Vagina (tissue), 2 donors: ENCODE measurements at regions of chr3 and their contacts with region 1.

Region 1: DNA sequence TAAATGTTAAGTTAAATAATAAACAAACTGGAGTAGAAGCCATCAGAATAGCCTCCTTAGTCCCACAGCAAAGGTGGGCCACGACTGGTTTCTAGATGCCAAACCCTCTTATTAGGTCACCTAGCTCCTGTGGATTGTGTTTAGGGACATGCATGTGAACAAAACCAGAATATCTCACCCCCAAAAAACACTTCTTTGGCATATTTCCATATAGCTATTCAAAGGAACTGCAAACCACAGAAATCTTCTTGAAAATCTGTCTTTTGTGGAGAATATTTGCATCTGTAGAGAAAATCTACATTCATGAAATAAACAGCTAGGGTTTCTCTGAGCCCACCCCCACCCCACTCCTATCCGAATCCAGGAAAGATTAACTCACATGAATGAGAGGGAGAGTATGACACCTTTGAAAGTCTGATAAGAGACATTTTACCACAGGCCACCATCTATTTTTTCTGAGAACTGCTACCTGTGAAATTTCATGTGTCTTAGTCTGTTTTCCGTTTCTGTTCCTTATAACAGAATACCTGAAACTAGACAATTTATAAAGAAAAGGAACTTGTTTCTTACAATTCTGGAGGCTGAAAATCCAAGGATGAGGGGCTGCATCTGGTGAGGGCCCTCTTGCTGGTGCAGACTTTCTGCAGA is 159.4 kb downstream of the NEK10 start:
- DNase-seq: no peak
- H3K4me3 ChIP-seq: no peak overlapping the region
- H3K27ac ChIP-seq: no peak overlapping the region
- H3K4me1 ChIP-seq: no peaks in the 10 kb centered on the region
- H3K27me3 ChIP-seq: no peaks in the 10 kb centered on the region
- CTCF ChIP-seq: no peak
- POLR2A ChIP-seq: no peak

Region 2: DNA sequence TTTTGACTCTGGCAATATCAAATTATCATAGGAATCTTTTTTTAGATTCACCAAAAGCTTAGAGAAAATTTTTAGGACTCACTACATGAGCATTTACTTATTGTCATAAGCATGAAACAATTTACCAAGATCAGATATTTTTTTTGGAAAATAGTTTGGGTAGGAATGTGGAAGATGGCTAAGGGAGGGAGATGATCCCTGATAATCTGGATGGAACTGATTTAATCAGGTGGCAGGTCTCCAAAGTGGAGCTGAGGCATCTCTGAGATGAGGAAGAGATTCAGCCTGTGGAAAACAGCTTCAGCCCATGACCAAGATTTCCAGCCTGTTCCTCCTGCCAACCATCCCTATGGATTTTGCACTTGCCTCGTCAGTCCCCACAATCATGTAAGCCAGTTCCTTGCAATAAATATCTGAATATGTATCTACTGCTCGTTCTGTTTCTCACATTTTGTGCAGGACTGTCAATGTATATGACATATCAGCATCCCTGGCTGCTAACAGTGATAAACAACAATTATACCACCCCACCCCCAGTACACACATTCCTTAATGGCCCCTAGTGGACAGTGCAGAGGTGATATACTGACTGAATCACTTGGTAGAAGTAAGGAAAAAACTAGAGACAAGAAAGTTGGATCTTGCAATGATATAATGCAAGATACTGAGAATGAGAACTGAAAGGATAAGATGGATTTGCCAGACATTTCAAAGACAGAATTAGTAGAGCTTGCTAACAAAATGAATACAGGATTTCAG is 24.3 kb before region 1 on chr3:
- intact Hi-C with region 1: loop called (anchors 1 kb)
- DNase-seq: no peak
- H3K4me3 ChIP-seq: no peak overlapping the region
- H3K27ac ChIP-seq: no peak overlapping the region
- H3K4me1 ChIP-seq: no peaks in the 10 kb centered on the region
- H3K27me3 ChIP-seq: no peaks in the 10 kb centered on the region
- CTCF ChIP-seq: no peak
- POLR2A ChIP-seq: no peak

Region 3: GRCh38 chr3:27253831-27254230 is 44.1 kb after region 1 on chr3:
- intact Hi-C with region 1: no loop called
- DNase-seq: no peak
- H3K4me3 ChIP-seq: no peak overlapping the region
- H3K27ac ChIP-seq: no peak overlapping the region
- H3K4me1 ChIP-seq: no peaks in the 10 kb centered on the region
- H3K27me3 ChIP-seq: no peaks in the 10 kb centered on the region
- CTCF ChIP-seq: no peak
- POLR2A ChIP-seq: no peak